B cell (primary cell): ENCODE measurements at regions of chr13 and their contacts with region 1.

Region 1: DNA sequence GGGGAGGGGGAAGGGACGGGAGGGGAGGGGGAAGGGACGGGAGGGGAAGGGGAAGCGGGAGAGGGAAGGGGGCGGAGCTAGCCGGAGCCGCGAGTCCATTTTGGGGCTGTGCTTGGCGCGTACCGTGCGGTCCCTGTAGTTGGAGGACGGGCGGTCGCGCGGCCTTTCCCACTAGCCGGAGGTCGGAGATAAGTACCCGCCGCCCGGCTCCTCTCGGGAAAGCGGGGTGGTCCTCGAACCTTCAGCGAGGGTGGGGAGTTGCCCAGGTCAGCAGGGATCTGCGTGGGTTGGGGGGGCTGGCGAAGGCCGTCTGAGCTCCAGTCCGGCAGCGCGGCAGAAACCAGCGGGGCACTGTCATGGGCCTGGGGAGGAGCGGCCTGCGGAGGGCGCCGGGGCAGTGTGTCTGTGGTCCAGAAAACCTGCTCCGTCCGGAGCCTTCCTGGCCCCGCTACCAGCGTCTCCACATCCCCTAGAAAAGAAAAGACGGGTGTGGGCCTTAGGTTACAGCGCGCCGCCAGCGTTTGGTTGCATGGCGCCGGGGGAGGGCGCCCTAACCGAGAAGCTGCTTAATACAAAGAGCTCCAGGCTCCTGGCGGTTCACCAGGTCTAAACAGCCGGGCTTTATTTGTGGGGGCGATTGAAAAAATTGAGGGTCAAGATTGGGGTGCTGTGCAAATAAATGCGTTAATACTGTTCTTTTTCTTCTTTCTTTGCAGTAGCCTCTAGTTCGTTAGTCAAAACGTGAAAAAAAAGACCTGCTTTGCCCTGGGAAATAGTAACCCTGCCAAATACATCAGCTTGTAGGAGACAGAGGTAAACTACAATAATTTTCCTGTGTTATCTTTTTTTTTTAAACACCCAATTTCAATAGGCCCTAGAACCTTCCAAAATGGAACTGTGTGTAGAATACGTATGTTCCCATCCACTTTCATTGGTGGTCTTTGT is at the start of gene TRIM13:
- DNase-seq: peak; percentile 93
- ATAC-seq: peak; percentile 74
- H3K4me3 ChIP-seq: peak within 1 kb of the TSS; percentile 78 to 96 (median 94)
- H3K4me3 Mint-ChIP-seq: peak within 1 kb of the TSS; percentile 90
- H3K27ac ChIP-seq: peak within 1 kb of the TSS; percentile 93
- H3K27ac Mint-ChIP-seq: peak within 1 kb of the TSS; percentile 96
- H3K4me1 ChIP-seq: peaks cover 30 to 42% of the 10 kb centered on the region in 2 donors
- H3K4me1 Mint-ChIP-seq: peaks cover 49% of the 10 kb centered on the region
- H3K27me3 ChIP-seq: no peaks in the 10 kb centered on the region
- H3K27me3 Mint-ChIP-seq: no peaks in the 10 kb centered on the region
- CTCF ChIP-seq: peak; percentile 89
- total RNA-seq, gene TRIM13: 45.9 and 52.8 TPM in 2 replicates

Region 2: GRCh38 chr13:50015258-50015657 is 18.0 kb after region 1 on chr13 and contains the start of gene KCNRG:
- CTCF ChIA-PET with region 1: interaction called, 11 read pairs
- POLR2A ChIA-PET with region 1: no interaction called
- intact Hi-C with region 1: loop called (anchors 2 kb)
- DNase-seq: no peak
- ATAC-seq: no peak
- H3K4me3 ChIP-seq: no peak within 1 kb of the TSS
- H3K4me3 Mint-ChIP-seq: no peak within 1 kb of the TSS
- H3K27ac ChIP-seq: peak within 1 kb of the TSS in 1 of 2 donors; percentile 65
- H3K27ac Mint-ChIP-seq: peak within 1 kb of the TSS; percentile 42
- H3K4me1 ChIP-seq: no peaks in the 10 kb centered on the region
- H3K4me1 Mint-ChIP-seq: peaks cover 46% of the 10 kb centered on the region
- H3K27me3 ChIP-seq: no peaks in the 10 kb centered on the region
- H3K27me3 Mint-ChIP-seq: no peaks in the 10 kb centered on the region
- CTCF ChIP-seq: no peak
- total RNA-seq, gene KCNRG: 1.6 and 3.4 TPM in 2 replicates

Region 3: DNA sequence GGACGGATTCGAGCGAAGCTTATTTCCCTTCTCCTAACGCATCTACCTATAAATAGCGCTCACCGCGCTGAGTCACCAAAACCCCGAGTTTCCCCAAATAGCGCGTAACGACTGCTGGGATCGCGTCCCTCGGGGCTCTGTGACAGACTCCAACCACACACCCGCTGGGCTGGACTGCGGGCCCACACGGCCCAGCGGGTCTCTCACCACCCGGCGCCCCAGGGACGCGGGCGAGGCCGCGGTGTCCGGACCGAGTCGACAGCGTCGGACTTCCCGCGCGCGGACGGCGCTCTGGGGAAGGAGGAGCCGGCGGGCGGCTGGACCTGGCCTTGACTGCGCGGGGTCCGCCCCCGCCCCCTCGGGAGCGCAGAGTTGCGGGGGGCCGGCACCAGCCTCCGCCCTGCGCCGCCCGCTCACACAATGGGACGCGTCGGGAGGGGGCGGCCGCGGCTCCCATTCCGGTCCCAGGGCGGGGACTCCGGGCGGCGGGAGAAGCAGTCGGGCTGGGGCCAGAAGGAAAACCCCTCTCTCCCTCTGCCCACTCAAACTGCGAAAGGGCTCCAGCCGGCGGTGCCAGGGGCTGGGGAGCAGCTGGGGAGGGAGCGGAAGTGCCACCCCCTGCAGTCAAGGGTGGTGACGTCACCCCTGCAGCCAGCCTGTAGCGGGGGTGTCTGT is 126.8 kb after region 1 on chr13:
- CTCF ChIA-PET with region 1: interaction called, 34 read pairs
- POLR2A ChIA-PET with region 1: interaction called, 69 read pairs
- intact Hi-C with region 1: loop called (anchors 1 kb)
- DNase-seq: peak; percentile 84
- ATAC-seq: peak; percentile 62
- H3K4me3 ChIP-seq: peak overlapping the region; percentile 77 to 98 (median 98)
- H3K4me3 Mint-ChIP-seq: peak overlapping the region; percentile 92
- H3K27ac ChIP-seq: peak overlapping the region; percentile 73 to 98
- H3K27ac Mint-ChIP-seq: peak overlapping the region; percentile 96
- H3K4me1 ChIP-seq: peaks cover 50 to 54% of the 10 kb centered on the region in 2 donors
- H3K4me1 Mint-ChIP-seq: peaks cover 64% of the 10 kb centered on the region
- H3K27me3 ChIP-seq: peaks cover 0 to 12% (median 6%) of the 10 kb centered on the region in 4 experiments
- H3K27me3 Mint-ChIP-seq: peaks cover 7% of the 10 kb centered on the region
- CTCF ChIP-seq: no peak

Region 4: GRCh38 chr13:50171590-50172282 is 174.5 kb after region 1 on chr13:
- CTCF ChIA-PET with region 1: no interaction called
- POLR2A ChIA-PET with region 1: no interaction called
- intact Hi-C with region 1: no loop called
- DNase-seq: no peak
- ATAC-seq: no peak
- H3K4me3 ChIP-seq: no peak overlapping the region
- H3K4me3 Mint-ChIP-seq: no peak overlapping the region
- H3K27ac ChIP-seq: no peak overlapping the region
- H3K27ac Mint-ChIP-seq: no peak overlapping the region
- H3K4me1 ChIP-seq: no peaks in the 10 kb centered on the region
- H3K4me1 Mint-ChIP-seq: no peaks in the 10 kb centered on the region
- H3K27me3 ChIP-seq: no peaks in the 10 kb centered on the region
- H3K27me3 Mint-ChIP-seq: no peaks in the 10 kb centered on the region
- CTCF ChIP-seq: no peak

Region 5: DNA sequence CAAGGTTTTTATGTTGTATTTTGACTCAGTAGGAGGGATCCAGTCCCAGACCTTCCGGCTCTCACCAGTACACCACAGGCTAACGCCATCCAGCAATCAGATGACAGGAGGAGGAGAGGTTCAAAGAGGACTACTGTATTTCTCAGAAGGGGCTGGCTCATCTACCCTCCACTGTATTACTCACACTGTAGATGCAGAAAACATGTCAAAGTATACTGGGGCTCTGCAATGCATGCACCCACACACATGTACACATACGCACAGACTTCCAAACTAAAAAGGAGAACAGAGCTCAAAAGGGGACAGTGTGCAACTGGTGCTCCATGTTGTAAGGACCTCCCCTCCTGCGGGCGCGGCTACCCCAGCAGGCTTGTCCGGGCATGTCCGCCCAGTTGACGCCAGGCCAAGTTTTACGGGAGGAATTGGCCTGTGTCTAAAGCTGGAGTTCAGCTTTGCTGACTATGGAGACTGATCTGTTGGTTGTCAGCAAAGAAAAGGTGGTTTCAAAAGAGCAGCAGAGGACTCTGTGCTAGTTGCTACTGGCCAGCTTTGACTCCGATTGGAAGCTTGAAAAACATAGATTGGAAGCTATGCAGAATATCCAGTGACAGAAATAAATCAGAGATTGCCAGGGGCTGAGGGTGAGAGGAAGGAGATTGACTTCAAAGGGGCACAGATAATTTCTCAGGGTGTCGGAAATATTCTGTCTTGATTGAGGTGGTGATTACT is 532.1 kb after region 1 on chr13:
- CTCF ChIA-PET with region 1: interaction called, 7 read pairs
- POLR2A ChIA-PET with region 1: no interaction called
- intact Hi-C with region 1: loop called (anchors 1 kb)
- DNase-seq: no peak
- ATAC-seq: no peak
- H3K4me3 ChIP-seq: no peak overlapping the region
- H3K4me3 Mint-ChIP-seq: no peak overlapping the region
- H3K27ac ChIP-seq: no peak overlapping the region
- H3K27ac Mint-ChIP-seq: no peak overlapping the region
- H3K4me1 ChIP-seq: peaks cover 24 to 25% of the 10 kb centered on the region in 2 donors
- H3K4me1 Mint-ChIP-seq: peaks cover 35% of the 10 kb centered on the region
- H3K27me3 ChIP-seq: no peaks in the 10 kb centered on the region
- H3K27me3 Mint-ChIP-seq: no peaks in the 10 kb centered on the region
- CTCF ChIP-seq: no peak